ENCODE measurements at regions of chr1 and their contacts with region 1.

Region 1: GRCh38 chr1:203486618-203487370 is 7.2 kb upstream of the OPTC start:
- DNase-seq: peak; percentile 77
- H3K4me3 ChIP-seq: peak overlapping the region in 3 of 4 donors; percentile 4 to 32 (median 24)
- H3K27ac ChIP-seq: peak overlapping the region; percentile 82 to 96 (median 89)
- H3K4me1 ChIP-seq: peaks cover 0 to 69% (median 56%) of the 10 kb centered on the region in 4 donors
- H3K27me3 ChIP-seq: no peaks in the 10 kb centered on the region
- CTCF ChIP-seq: no peak
- EP300 ChIP-seq: no peak
- POLR2A ChIP-seq: peak in 1 of 2 donors; percentile 10

Region 2: DNA sequence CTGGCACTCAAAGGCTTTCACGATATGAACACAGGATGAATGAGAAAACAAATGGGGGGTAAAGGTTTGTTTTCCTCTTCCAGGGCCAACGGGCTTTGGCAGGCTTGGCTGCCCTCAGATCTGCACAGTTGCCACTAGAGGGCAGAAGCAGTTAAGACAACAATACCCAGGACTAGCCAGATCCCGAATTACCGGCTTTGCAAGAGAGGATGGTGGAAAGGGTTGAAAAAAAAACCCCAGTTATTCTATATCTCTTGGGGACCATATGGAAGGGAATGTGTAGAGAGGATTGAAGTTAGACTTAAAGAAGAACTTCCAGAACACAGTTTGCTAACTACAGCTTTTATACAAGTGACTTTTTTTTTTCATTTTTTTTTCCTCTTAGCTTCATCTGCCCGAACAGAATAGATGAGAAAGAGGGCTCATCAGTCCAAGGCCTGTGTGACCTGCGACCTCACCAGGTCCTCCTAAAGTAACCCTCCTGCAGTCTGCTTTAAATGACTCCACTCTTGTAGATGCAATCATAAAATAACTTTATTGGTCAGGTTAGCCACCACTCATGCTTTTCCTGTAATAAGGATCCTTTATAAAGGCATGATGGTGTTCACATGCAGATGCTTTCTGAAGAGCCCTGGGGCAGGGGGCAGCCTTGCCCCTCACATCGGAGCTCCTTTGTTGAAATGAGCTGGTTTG is 146.5 kb before region 1 on chr1:
- intact Hi-C with region 1: loop called (anchors 1 kb)
- DNase-seq: peak; percentile 89
- H3K4me3 ChIP-seq: no peak overlapping the region
- H3K27ac ChIP-seq: no peak overlapping the region
- H3K4me1 ChIP-seq: peaks cover 0 to 15% (median 7%) of the 10 kb centered on the region in 4 donors
- H3K27me3 ChIP-seq: no peaks in the 10 kb centered on the region
- CTCF ChIP-seq: peak; percentile 82 to 90 (median 86)
- EP300 ChIP-seq: no peak
- POLR2A ChIP-seq: no peak

Region 3: GRCh38 chr1:203368624-203369451 is 118.0 kb before region 1 on chr1:
- intact Hi-C with region 1: loop called (anchors 2 kb)
- DNase-seq: peak; percentile 94
- H3K4me3 ChIP-seq: no peak overlapping the region
- H3K27ac ChIP-seq: peak overlapping the region; percentile 46 to 55 (median 50)
- H3K4me1 ChIP-seq: peaks cover 0 to 21% (median 14%) of the 10 kb centered on the region in 4 donors
- H3K27me3 ChIP-seq: no peaks in the 10 kb centered on the region
- CTCF ChIP-seq: peak in 3 of 4 experiments; percentile 23 to 48 (median 38)
- EP300 ChIP-seq: no peak
- POLR2A ChIP-seq: no peak

Region 4: GRCh38 chr1:203463469-203464062 is 23.2 kb before region 1 on chr1:
- intact Hi-C with region 1: loop called (anchors 2 kb)
- DNase-seq: no peak
- H3K4me3 ChIP-seq: no peak overlapping the region
- H3K27ac ChIP-seq: peak overlapping the region; percentile 89 to 95 (median 94)
- H3K4me1 ChIP-seq: peaks cover 0 to 68% (median 60%) of the 10 kb centered on the region in 4 donors
- H3K27me3 ChIP-seq: no peaks in the 10 kb centered on the region
- CTCF ChIP-seq: peak in 3 of 4 experiments; percentile 14 to 44 (median 40)
- EP300 ChIP-seq: no peak
- POLR2A ChIP-seq: no peak